ENCODE measurements at regions of chr5 and their contacts with region 1.

Region 1: DNA sequence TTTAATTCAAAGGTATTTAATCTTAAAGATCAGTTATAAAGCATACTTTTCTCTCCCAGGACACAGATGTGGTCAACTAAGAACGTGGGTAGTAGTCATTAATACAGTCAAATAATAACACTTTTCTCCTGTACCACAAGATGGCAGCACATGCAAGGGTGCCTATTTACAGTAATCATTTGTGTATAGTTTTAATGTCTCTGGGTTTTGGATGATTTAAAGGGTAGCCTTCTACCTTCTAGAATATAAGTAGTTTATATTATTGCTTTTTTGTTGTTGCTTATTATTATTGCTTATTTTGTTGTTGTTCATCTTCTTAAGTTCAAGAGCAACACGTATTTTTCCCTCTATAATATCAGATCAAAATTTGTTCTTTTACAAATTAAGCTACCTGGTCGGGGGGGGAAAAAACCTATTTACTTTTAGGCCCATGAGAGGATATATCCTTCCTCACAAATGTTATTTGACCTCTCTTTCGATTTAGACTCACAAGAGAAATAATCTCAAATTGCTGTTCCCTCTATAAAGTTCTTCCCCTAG is 59.6 kb upstream of the SLC27A6 start:
- DNase-seq: peak in 1 of 3 donors; percentile 41
- ATAC-seq: peak; percentile 45
- H3K4me3 ChIP-seq: no peak overlapping the region
- H3K4me1 ChIP-seq: no peaks in the 10 kb centered on the region
- CTCF ChIP-seq: peak; percentile 50

Region 2: DNA sequence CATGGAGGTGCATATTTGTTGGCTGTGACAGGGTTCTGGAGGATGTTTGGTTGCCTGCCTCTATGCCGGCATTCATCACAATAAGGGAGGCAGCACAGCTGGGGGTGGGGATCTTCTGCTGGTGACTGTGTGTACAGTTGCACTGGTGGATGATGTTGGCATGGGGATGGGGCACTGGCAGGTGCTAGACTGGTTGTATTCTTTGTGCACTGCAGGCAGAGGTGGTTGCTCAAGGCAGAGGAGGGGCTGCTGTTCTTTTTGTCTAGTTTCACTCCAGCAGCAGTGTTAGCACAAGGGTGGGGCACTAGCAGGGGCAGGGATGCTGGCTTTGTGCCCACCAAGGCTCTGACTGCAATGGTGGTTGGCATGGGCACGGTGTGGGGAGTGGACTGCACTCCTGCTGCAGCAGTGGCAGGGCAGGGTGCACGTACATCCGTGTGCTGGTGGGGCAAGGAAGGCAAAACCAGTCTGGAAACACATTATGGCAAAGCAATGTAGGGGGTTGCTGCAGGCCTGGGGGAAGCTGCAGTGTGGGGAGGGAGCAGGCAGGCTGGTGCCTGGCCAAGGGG is 258.3 kb after region 1 on chr5:
- intact Hi-C with region 1: no loop called
- DNase-seq: no peak
- ATAC-seq: no peak
- H3K4me3 ChIP-seq: no peak overlapping the region
- H3K4me1 ChIP-seq: no peaks in the 10 kb centered on the region
- CTCF ChIP-seq: no peak

Region 3: DNA sequence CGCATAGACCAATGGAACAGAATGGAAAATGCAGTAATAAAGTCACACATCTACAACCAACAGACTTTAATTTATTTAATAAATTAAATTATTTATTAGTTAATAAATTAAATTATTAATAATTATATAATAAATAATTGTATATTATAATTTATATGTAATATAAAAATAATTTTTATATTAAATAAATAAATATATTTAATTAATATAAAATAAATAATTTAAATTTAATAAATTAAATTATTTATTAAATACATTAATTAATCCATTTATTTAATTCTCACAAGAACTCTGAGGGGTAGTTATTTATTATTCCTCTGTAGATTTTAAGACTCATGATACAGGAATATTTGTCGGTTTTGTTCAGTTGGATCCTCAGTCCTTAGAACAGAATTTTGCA is 378.4 kb after region 1 on chr5:
- intact Hi-C with region 1: no loop called
- DNase-seq: no peak
- ATAC-seq: no peak
- H3K4me3 ChIP-seq: no peak overlapping the region
- H3K4me1 ChIP-seq: no peaks in the 10 kb centered on the region
- CTCF ChIP-seq: no peak

Region 4: GRCh38 chr5:129767906-129768380 is 862.3 kb after region 1 on chr5:
- intact Hi-C with region 1: loop called in 1 of 2 experiments (anchors 5 kb)
- DNase-seq: peak in 2 of 3 donors; percentile 20 to 91
- ATAC-seq: peak; percentile 97
- H3K4me3 ChIP-seq: no peak overlapping the region
- H3K4me1 ChIP-seq: no peaks in the 10 kb centered on the region
- CTCF ChIP-seq: peak; percentile 90

Measured in mucosa of descending colon (tissue), 3 donors.